Left ventricle myocardium inferior (tissue), 1 donor: ENCODE measurements at regions of chr18 and their contacts with region 1.

Region 1: DNA sequence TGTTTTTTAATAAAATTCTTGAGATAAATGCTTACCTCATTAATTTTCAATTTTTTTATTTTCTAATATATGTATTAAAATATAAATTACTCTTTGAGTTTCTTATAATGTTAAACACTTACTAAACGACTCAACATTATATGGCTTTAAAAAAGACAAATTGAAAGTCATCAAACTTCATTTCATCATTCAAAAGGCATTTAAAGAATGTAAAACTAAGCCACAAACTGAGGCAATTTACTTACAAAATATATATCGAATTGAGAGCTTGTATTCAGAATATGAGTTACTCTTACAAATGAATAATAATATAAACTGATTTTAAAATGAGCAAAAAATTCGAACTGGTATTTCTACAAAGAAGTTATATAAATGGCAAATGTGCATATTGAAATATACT is 1262.2 kb upstream of the PIK3C3 start:
- DNase-seq: no peak
- H3K4me3 ChIP-seq: no peak overlapping the region
- H3K27ac ChIP-seq: no peak overlapping the region
- H3K4me1 ChIP-seq: no peaks in the 10 kb centered on the region
- H3K27me3 ChIP-seq: no peaks in the 10 kb centered on the region
- CTCF ChIP-seq: no peak

Region 2: GRCh38 chr18:40642692-40643229 is 50.1 kb before region 1 on chr18:
- intact Hi-C with region 1: loop called (anchors 5 kb)
- DNase-seq: no peak
- H3K4me3 ChIP-seq: no peak overlapping the region
- H3K27ac ChIP-seq: no peak overlapping the region
- H3K4me1 ChIP-seq: no peaks in the 10 kb centered on the region
- H3K27me3 ChIP-seq: no peaks in the 10 kb centered on the region
- CTCF ChIP-seq: no peak